CD4-positive, alpha-beta memory T cell (primary cell): ENCODE measurements at regions of chr12 and their contacts with region 1.

Region 1: DNA sequence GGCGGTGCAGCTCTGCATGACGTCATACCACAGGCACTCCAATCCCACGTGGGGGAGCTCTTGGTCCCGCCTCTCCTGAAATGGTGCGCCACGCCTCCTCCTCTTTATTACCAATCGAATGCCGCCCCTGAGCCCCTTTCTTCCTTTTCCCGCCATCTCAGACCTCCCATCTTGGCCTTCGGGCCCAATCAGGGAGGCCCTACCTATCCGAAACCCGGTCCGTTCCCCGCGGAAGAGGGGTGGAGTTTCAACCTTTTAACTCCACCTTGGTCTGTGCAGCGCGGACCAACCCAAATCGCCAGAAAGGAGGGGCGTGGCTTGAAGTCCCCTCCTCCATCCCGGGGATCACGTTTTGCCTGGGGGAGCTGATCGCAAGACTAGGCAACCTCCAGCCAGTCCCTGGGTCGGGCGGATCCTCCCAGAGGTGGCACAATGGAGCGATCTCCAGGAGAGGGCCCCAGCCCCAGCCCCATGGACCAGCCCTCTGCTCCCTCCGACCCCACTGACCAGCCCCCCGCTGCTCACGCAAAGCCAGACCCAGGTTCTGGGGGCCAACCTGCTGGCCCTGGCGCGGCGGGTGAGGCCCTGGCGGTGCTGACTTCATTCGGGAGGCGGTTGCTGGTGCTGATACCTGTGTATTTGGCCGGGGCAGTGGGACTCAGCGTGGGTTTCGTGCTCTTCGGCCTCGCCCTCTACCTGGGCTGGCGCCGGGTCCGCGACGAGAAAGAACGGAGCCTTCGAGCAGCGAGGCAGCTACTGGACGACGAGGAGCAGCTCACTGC is at the start of gene ESYT1:
- DNase-seq: peak; percentile 96 to 100 (median 99)
- H3K4me3 ChIP-seq: peak within 1 kb of the TSS; percentile 81 to 96
- H3K4me3 Mint-ChIP-seq: peak within 1 kb of the TSS; percentile 96 to 100 (median 98)
- H3K27ac ChIP-seq: peak within 1 kb of the TSS; percentile 82
- H3K27ac Mint-ChIP-seq: peak within 1 kb of the TSS; percentile 89 to 99 (median 98)
- H3K4me1 ChIP-seq: peaks cover 69% of the 10 kb centered on the region
- H3K4me1 Mint-ChIP-seq: peaks cover 46 to 84% (median 59%) of the 10 kb centered on the region in 4 donors
- H3K27me3 ChIP-seq: no peaks in the 10 kb centered on the region
- H3K27me3 Mint-ChIP-seq: no peaks in the 10 kb centered on the region
- total RNA-seq, gene ESYT1: 249 to 258 TPM

Region 2: DNA sequence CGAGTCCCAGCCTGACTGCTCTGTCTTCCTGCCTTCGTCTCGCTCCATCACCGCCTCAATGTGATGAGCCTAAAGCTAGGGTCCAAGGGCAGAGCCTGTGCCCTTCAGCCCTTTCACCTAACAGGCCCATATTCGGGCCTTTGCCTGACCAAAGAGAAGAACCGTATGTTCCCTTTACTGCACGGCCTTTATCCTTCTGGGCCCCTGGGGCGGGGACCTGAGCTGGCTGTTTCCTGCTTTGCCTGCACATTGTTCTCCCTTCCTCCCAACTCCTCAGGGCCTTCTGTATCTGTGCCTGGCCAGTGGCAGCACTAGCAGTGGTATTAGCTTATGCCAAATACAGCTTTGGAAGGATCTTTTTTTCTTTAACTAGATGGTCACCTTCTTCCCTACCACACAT is 15.8 kb after region 1 on chr12:
- CTCF ChIA-PET with region 1: interaction called, 16 read pairs
- POLR2A ChIA-PET with region 1: interaction called, 63 read pairs
- intact Hi-C with region 1: loop called (anchors 1 kb)
- DNase-seq: no peak
- H3K4me3 ChIP-seq: no peak overlapping the region
- H3K4me3 Mint-ChIP-seq: peak overlapping the region in 1 of 8 donors; percentile 10
- H3K27ac ChIP-seq: no peak overlapping the region
- H3K27ac Mint-ChIP-seq: peak overlapping the region; percentile 51 to 90 (median 83)
- H3K4me1 ChIP-seq: peaks cover 39% of the 10 kb centered on the region
- H3K4me1 Mint-ChIP-seq: peaks cover 24 to 53% (median 37%) of the 10 kb centered on the region in 4 donors
- H3K27me3 ChIP-seq: no peaks in the 10 kb centered on the region
- H3K27me3 Mint-ChIP-seq: no peaks in the 10 kb centered on the region

Region 3: DNA sequence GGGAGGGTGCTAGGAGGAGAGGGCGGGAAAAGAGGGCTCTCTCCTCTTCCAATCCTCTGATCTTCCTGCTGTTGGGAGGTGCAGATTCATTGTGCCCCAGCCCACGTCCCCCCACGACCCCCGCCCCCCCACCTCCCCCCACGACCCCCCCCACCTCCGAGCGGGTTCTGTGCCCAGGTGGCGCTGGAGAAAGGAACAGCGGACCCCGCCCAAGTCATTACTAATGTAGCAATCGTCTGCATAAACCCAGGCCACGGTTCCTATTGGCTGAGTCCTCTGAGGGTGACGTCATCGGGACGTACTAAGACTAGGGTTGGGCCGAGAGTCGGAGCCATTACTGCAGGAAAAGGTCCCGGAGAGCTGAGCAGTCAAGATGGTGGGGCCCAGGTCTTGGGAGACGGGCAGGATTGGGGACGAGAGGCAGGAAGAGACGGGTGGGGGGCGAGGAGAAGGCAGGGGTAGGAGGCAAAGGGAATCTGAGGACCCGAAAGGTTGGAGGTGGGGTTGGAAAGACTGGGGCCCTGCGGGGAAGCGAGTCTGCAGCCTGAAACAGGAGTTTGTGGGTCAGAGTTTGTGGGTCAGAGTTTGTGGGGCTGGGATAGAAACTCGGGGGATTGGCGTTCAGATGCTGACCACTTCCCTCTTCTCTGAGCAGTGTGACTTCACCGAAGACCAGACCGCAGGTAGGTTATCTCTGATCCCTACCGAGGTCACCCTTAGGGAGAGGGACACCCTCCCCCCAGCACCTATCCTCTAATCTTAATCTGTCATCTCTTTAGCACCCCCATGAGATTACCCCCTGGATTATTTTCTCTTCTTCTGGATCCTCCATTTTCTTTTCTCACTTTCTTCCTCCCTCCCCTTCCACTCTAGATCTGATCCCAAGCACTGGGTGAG is 30.2 kb after region 1 on chr12 and contains the start of gene MYL6:
- CTCF ChIA-PET with region 1: interaction called, 13 read pairs
- POLR2A ChIA-PET with region 1: interaction called, 236 read pairs
- intact Hi-C with region 1: loop called (anchors 1 kb)
- DNase-seq: peak; percentile 88 to 98 (median 91)
- H3K4me3 ChIP-seq: peak within 1 kb of the TSS; percentile 86 to 89
- H3K4me3 Mint-ChIP-seq: peak within 1 kb of the TSS; percentile 93 to 100 (median 97)
- H3K27ac ChIP-seq: peak within 1 kb of the TSS; percentile 97
- H3K27ac Mint-ChIP-seq: peak within 1 kb of the TSS; percentile 96 to 100 (median 99)
- H3K4me1 ChIP-seq: peaks cover 40% of the 10 kb centered on the region
- H3K4me1 Mint-ChIP-seq: peaks cover 28 to 64% (median 37%) of the 10 kb centered on the region in 4 donors
- H3K27me3 ChIP-seq: no peaks in the 10 kb centered on the region
- H3K27me3 Mint-ChIP-seq: no peaks in the 10 kb centered on the region
- total RNA-seq, gene MYL6: 567 to 589 TPM

Region 4: DNA sequence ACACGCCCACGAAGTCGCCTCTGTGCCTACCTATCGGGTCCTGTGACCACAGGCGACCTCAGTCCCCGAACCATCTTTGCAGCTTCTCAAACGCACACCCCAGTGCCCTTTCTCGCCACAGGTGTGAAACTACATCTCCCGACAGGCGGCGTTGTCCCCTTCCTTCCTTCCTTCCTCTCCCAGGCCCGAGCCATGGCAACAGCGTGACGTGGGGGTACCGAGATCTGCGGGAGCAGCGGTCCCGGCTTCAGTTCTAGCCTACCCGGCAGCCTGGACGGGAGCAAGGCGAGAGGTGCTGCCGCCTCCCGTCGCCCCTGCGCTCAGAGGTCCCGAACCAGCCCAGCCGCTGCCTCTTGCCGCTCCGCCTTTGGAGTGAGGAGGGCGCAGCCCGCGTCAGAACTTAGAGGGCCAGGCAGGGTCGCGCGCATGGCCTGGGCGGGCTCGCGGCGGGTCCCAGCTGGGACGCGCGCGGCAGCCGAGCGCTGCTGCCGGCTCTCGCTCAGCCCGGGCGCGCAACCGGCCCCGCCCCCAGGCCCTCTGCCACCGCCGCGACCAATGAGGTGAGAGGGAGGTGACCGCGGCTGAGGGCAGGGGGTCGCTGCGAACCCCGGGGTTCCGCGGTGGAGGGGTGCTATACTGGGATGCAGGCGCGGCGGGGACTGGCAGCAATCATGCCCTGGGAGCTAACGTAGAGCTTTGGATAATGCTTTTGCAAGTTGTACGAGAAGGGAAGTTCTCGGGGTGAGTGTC is 138.8 kb after region 1 on chr12 and contains the start of gene COQ10A:
- CTCF ChIA-PET with region 1: interaction called, 3 read pairs
- POLR2A ChIA-PET with region 1: interaction called, 10 read pairs
- intact Hi-C with region 1: no loop called
- DNase-seq: peak; percentile 89 to 96 (median 91)
- H3K4me3 ChIP-seq: peak within 1 kb of the TSS; percentile 27 to 90
- H3K4me3 Mint-ChIP-seq: peak within 1 kb of the TSS; percentile 89 to 99 (median 96)
- H3K27ac ChIP-seq: peak within 1 kb of the TSS; percentile 84
- H3K27ac Mint-ChIP-seq: peak within 1 kb of the TSS; percentile 90 to 99 (median 97)
- H3K4me1 ChIP-seq: peaks cover 14% of the 10 kb centered on the region
- H3K4me1 Mint-ChIP-seq: peaks cover 10 to 23% (median 16%) of the 10 kb centered on the region in 4 donors
- H3K27me3 ChIP-seq: no peaks in the 10 kb centered on the region
- H3K27me3 Mint-ChIP-seq: no peaks in the 10 kb centered on the region
- total RNA-seq, gene COQ10A: 35.3 to 38.6 TPM